Head of caudate nucleus (tissue), 42 donors: ENCODE measurements at regions of chr5 and their contacts with region 1.

Region 1: DNA sequence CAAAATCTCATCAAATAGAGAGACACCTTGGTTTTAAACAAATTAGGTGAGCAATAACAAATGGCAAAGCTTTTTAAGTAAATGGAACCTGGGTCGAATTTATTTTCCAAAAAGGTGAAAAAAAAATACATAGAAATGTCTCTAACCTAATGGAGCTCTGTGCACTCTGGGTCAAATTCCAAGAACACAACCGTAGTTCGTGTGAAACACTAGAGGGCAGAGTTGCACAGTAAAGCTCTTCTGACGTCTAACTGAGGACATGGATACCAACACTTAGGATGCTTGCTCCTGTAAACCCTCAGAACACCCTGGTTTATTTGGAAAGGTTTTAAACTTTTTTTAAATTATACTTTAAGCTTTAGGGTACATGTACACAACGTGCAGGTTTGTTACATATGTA is 18.9 kb downstream of the MARCHF11 start:
- DNase-seq: peak in 24 of 42 donors; percentile 10 to 72 (median 44)

Region 2: DNA sequence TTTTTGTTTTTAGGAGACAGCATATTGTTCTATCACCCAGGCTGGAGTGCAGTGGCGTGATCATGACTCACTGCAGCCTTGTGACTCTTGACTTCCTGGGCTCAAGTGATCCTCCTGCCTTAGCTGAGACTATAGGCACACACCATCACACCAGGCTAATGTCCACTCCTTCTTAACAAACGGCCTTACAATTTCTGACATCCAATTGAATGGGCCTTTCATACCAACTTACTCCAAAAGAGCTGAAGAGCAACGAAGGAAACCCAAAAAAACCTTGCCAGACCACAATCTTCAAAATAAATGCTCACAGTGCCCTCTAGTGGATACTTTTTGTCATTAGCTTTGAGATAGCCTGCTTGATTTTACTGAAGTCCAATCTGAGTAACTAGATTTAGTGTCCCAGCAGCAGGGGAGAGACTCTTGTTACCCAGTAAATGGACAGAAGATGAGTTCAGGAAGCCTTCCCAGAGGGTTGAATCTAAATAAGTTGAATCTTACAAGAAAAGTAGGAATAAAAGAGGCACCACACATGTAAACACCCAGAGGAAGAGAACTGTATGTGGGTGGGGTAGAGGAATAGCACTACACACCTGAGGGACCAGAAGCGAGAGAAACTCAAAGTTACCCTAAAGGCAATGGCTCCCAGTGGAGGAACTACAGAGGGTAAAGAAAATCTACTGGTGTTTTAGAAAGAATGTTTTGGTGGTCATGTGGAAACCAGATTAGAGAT is 295.6 kb after region 1 on chr5:
- intact Hi-C with region 1: loop called (anchors 5 kb)
- DNase-seq: peak in 32 of 42 donors; percentile 5 to 75 (median 32)